CD8-positive, alpha-beta T cell (primary cell): ENCODE measurements at regions of chr4 and their contacts with region 1.

Region 1: DNA sequence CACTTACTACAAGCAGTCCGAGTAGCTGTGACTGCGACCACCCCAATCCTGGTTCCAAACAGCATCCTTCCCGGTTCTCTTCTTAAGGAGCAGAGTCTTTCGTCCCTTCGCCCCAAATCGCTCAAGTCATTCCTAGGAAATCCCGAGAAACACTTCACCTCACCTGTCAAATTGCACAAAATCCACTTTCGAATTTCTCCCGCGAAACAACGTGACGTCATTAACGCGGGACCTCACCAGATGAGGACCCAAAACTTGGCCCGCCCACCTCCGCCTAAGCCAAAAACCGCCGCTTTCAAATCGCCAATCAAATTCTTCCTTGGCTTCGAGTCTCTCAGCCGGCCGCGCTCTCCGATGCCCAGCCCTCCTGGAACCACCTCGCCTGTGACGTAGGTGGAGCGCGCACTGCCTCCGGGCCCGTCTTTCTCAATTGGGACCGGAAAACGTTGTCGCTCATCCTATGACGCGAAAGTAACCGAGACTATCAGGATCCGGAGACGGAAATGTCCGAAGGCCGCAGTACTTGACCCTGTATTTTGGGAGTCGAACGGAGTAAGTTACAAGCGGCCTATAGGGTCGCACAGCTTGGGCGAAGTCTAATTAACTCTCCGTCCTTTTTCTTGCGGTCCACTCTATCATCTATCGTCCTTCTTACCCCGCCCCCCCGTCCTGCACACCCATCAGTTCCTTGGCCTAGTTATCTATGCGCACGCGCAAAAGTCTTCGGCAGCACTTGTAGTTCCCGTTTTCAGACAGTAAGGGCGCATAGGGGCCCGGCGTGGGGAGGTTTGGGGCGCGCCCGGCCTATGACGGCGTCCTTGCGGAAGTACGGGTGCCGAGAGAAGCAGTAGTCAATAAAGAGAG is at the starts of genes LARP7 and ZGRF1:
- DNase-seq: peak; percentile 95 to 100 (median 98)
- ATAC-seq: peak; percentile 86
- H3K4me3 ChIP-seq: peak within 1 kb of the TSS; percentile 74 to 76
- H3K4me3 Mint-ChIP-seq: no peak within 1 kb of the TSS
- H3K27ac ChIP-seq: peak within 1 kb of the TSS; percentile 97 to 99
- H3K27ac Mint-ChIP-seq: no peak within 1 kb of the TSS
- H3K4me1 ChIP-seq: peaks cover 19% of the 10 kb centered on the region
- H3K4me1 Mint-ChIP-seq: peaks cover 17% of the 10 kb centered on the region
- H3K27me3 ChIP-seq: no peaks in the 10 kb centered on the region
- H3K27me3 Mint-ChIP-seq: no peaks in the 10 kb centered on the region
- CTCF ChIP-seq: peak; percentile 89
- total RNA-seq, gene LARP7: 46.7 to 47.2 TPM
- total RNA-seq, gene ZGRF1: 7.9 to 9.1 TPM

Region 2: GRCh38 chr4:112284662-112285411 is 352.1 kb before region 1 on chr4:
- CTCF ChIA-PET with region 1: no interaction called
- POLR2A ChIA-PET with region 1: no interaction called
- intact Hi-C with region 1: loop called (anchors 1 to 5 kb)
- DNase-seq: peak in 2 of 9 experiments; percentile 65 to 78
- ATAC-seq: no peak
- H3K4me3 ChIP-seq: peak overlapping the region; percentile 71 to 94
- H3K4me3 Mint-ChIP-seq: peak overlapping the region; percentile 95
- H3K27ac ChIP-seq: peak overlapping the region; percentile 80 to 82
- H3K27ac Mint-ChIP-seq: peak overlapping the region; percentile 93
- H3K4me1 ChIP-seq: peaks cover 27% of the 10 kb centered on the region
- H3K4me1 Mint-ChIP-seq: peaks cover 78% of the 10 kb centered on the region
- H3K27me3 ChIP-seq: no peaks in the 10 kb centered on the region
- H3K27me3 Mint-ChIP-seq: no peaks in the 10 kb centered on the region
- CTCF ChIP-seq: no peak

Region 3: GRCh38 chr4:112523764-112524505 is 113.0 kb before region 1 on chr4:
- CTCF ChIA-PET with region 1: no interaction called
- POLR2A ChIA-PET with region 1: no interaction called
- intact Hi-C with region 1: loop called (anchors 2 kb)
- DNase-seq: peak; percentile 54 to 88 (median 73)
- ATAC-seq: peak; percentile 83
- H3K4me3 ChIP-seq: peak overlapping the region; percentile 31 to 42
- H3K4me3 Mint-ChIP-seq: peak overlapping the region; percentile 82
- H3K27ac ChIP-seq: no peak overlapping the region
- H3K27ac Mint-ChIP-seq: no peak overlapping the region
- H3K4me1 ChIP-seq: peaks cover 18% of the 10 kb centered on the region
- H3K4me1 Mint-ChIP-seq: peaks cover 33% of the 10 kb centered on the region
- H3K27me3 ChIP-seq: peaks cover 33 to 37% of the 10 kb centered on the region in 2 experiments
- H3K27me3 Mint-ChIP-seq: peaks cover 44% of the 10 kb centered on the region
- CTCF ChIP-seq: peak; percentile 76

Region 4: DNA sequence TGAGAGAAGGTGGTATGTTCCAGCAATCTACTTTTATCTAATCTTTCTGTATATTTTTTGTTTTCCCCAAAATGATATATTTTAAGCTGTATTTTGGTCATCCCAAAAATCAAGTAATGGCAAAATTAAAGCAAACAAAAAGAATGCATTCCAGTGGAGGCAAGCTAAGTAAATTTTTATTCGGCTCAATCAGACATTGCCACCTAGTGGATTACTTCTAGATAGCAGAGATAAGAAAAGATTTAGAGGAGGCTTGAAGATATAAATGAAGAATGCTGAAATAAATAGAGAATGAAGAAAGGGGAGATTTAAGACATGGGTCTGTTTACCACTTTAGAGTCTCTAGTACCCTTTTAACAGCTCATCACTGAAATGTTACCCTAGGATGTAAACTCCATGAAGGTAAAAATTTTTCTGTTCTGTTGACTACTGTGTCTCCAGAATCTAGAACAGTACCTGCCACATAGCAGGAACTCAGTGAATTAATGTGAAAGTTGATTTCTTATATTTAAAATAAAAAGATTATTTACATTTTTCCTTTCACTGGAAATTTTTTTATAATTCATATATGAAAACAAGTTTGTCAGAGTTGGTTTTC is 301.6 kb after region 1 on chr4:
- CTCF ChIA-PET with region 1: no interaction called
- POLR2A ChIA-PET with region 1: no interaction called
- intact Hi-C with region 1: loop called (anchors 1 to 2 kb)
- DNase-seq: peak in 2 of 9 experiments; percentile 4 to 12
- ATAC-seq: no peak
- H3K4me3 ChIP-seq: no peak overlapping the region
- H3K4me3 Mint-ChIP-seq: no peak overlapping the region
- H3K27ac ChIP-seq: no peak overlapping the region
- H3K27ac Mint-ChIP-seq: no peak overlapping the region
- H3K4me1 ChIP-seq: no peaks in the 10 kb centered on the region
- H3K4me1 Mint-ChIP-seq: no peaks in the 10 kb centered on the region
- H3K27me3 ChIP-seq: no peaks in the 10 kb centered on the region
- H3K27me3 Mint-ChIP-seq: peaks cover 9% of the 10 kb centered on the region
- CTCF ChIP-seq: peak; percentile 53

Region 5: GRCh38 chr4:113761620-113762185 is 1124.8 kb after region 1 on chr4 and contains the start of gene CAMK2D:
- CTCF ChIA-PET with region 1: no interaction called
- POLR2A ChIA-PET with region 1: no interaction called
- intact Hi-C with region 1: loop called (anchors 5 kb)
- DNase-seq: peak; percentile 62 to 95 (median 80)
- ATAC-seq: peak; percentile 58
- H3K4me3 ChIP-seq: peak within 1 kb of the TSS; percentile 75 to 85
- H3K4me3 Mint-ChIP-seq: peak within 1 kb of the TSS; percentile 94
- H3K27ac ChIP-seq: peak within 1 kb of the TSS; percentile 96
- H3K27ac Mint-ChIP-seq: peak within 1 kb of the TSS; percentile 98
- H3K4me1 ChIP-seq: peaks cover 26% of the 10 kb centered on the region
- H3K4me1 Mint-ChIP-seq: peaks cover 38% of the 10 kb centered on the region
- H3K27me3 ChIP-seq: no peaks in the 10 kb centered on the region
- H3K27me3 Mint-ChIP-seq: no peaks in the 10 kb centered on the region
- CTCF ChIP-seq: no peak
- total RNA-seq, gene CAMK2D: 29.6 to 31.1 TPM